ENCODE measurements at regions of chr7 and their contacts with region 1.

Region 1: GRCh38 chr7:2354186-2354938 is at the start of gene EIF3B:
- DNase-seq: peak; percentile 88 to 95 (median 94)
- H3K4me3 ChIP-seq: peak within 1 kb of the TSS; percentile 72 to 88 (median 85)
- H3K4me3 Mint-ChIP-seq: peak within 1 kb of the TSS; percentile 86 to 90
- H3K27ac ChIP-seq: peak within 1 kb of the TSS; percentile 88 to 100
- H3K27ac Mint-ChIP-seq: peak within 1 kb of the TSS; percentile 96 to 100 (median 99)
- H3K4me1 ChIP-seq: peaks cover 24 to 31% of the 10 kb centered on the region in 2 donors
- H3K4me1 Mint-ChIP-seq: peaks cover 30% of the 10 kb centered on the region
- H3K27me3 ChIP-seq: no peaks in the 10 kb centered on the region
- H3K27me3 Mint-ChIP-seq: peaks cover 0 to 2% (median 1%) of the 10 kb centered on the region in 3 donors
- CTCF ChIP-seq: no peak
- polyA plus RNA-seq, gene EIF3B: 46.0 to 89.1 (median 69.2) TPM

Region 2: GRCh38 chr7:1569833-1570633 is 784.3 kb before region 1 on chr7 and contains the start of gene PSMG3:
- intact Hi-C with region 1: loop called (anchors 5 to 10 kb)
- DNase-seq: peak; percentile 87 to 88 (median 88)
- H3K4me3 ChIP-seq: peak within 1 kb of the TSS; percentile 59 to 99 (median 80)
- H3K4me3 Mint-ChIP-seq: peak within 1 kb of the TSS; percentile 87 to 94
- H3K27ac ChIP-seq: peak within 1 kb of the TSS; percentile 89 to 90
- H3K27ac Mint-ChIP-seq: peak within 1 kb of the TSS; percentile 83 to 93 (median 90)
- H3K4me1 ChIP-seq: peaks cover 21 to 32% of the 10 kb centered on the region in 2 donors
- H3K4me1 Mint-ChIP-seq: peaks cover 32% of the 10 kb centered on the region
- H3K27me3 ChIP-seq: no peaks in the 10 kb centered on the region
- H3K27me3 Mint-ChIP-seq: peaks cover 2 to 4% (median 3%) of the 10 kb centered on the region in 3 donors
- CTCF ChIP-seq: peak; percentile 32
- polyA plus RNA-seq, gene PSMG3: 32.6 to 38.8 (median 34.5) TPM

Region 3: DNA sequence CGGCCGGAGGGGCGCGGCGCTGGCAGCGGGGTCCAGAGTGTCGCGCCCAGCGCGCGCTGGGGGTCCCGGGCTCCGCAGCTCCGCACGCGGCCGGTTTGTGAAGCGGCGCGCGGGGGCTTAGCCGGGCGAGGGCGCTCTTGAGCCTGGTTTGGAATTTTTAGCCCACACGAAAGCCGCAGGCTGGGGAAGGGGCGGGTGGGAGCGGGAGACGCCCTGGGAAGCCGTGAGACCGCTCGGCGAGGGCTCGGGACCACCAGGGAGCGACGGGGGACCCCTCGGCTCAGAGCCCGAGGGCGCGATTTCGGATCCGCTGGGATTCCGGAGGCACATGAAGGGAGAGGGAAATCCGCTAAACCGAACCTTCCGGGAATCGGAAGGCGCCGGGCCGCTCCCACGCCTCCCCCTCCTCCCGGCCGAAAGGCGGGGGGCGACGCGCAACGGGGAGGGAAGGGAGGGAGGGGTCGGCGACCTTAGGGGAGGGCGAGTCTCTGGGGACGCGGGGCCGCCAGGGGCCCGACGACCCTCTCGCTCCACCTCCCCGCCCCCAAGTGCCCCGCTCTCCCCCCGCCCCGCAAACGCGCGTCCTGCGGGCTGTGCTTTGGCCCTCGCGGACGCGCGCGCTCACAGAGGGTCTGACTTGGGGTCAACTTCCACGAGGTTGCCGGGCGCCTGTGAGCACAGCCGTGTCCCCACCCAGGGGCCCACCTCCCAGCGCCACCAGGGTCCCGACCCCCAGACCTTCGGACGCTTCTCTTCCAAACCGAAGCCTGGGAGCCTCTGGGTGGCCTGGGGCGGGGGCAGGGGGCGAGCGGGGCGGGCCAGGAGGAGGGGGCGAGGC is 689.4 kb before region 1 on chr7:
- intact Hi-C with region 1: loop called (anchors 5 to 10 kb)
- DNase-seq: peak in 2 of 3 donors; percentile 12 to 26
- H3K4me3 ChIP-seq: peak overlapping the region; percentile 20 to 64 (median 32)
- H3K4me3 Mint-ChIP-seq: peak overlapping the region; percentile 56 to 73
- H3K27ac ChIP-seq: no peak overlapping the region
- H3K27ac Mint-ChIP-seq: no peak overlapping the region
- H3K4me1 ChIP-seq: peaks cover 14 to 26% of the 10 kb centered on the region in 2 donors
- H3K4me1 Mint-ChIP-seq: peaks cover 7% of the 10 kb centered on the region
- H3K27me3 ChIP-seq: peaks cover 33 to 72% of the 10 kb centered on the region in 2 donors
- H3K27me3 Mint-ChIP-seq: peaks cover 54 to 88% (median 69%) of the 10 kb centered on the region in 3 donors
- CTCF ChIP-seq: peak; percentile 63

Region 4: GRCh38 chr7:2314209-2314955 is 40.0 kb before region 1 on chr7 and contains the start of gene SNX8:
- intact Hi-C with region 1: loop called in 1 of 2 experiments (anchors 2 kb)
- DNase-seq: peak; percentile 82 to 90 (median 84)
- H3K4me3 ChIP-seq: peak within 1 kb of the TSS; percentile 63 to 83 (median 78)
- H3K4me3 Mint-ChIP-seq: peak within 1 kb of the TSS; percentile 91 to 99
- H3K27ac ChIP-seq: peak within 1 kb of the TSS; percentile 36 to 78
- H3K27ac Mint-ChIP-seq: peak within 1 kb of the TSS in 6 of 7 donors; percentile 64 to 92 (median 85)
- H3K4me1 ChIP-seq: peaks cover 11 to 23% of the 10 kb centered on the region in 2 donors
- H3K4me1 Mint-ChIP-seq: peaks cover 34% of the 10 kb centered on the region
- H3K27me3 ChIP-seq: no peaks in the 10 kb centered on the region
- H3K27me3 Mint-ChIP-seq: peaks cover 1 to 6% (median 2%) of the 10 kb centered on the region in 3 donors
- CTCF ChIP-seq: no peak
- polyA plus RNA-seq, gene SNX8: 15.4 to 43.7 (median 41.9) TPM

Measured in CD14-positive monocyte (primary cell).